ENCODE measurements at regions of chr5 and their contacts with region 1.

Region 1: GRCh38 chr5:150758531-150759333 is at the start of gene DCTN4:
- DNase-seq: peak; percentile 98
- ATAC-seq: peak; percentile 97
- H3K4me3 ChIP-seq: peak within 1 kb of the TSS; percentile 95
- H3K27ac ChIP-seq: peak within 1 kb of the TSS; percentile 95
- H3K4me1 ChIP-seq: peaks cover 4% of the 10 kb centered on the region; the same call in 1 of the 2 replicates
- H3K27me3 ChIP-seq: no peaks in the 10 kb centered on the region
- CTCF ChIP-seq: no peak
- EP300 ChIP-seq: no peak
- POLR2A ChIP-seq: peak; percentile 91
- RAD21 ChIP-seq: no peak
- polyA plus RNA-seq, gene DCTN4: 7.6 to 8.5 TPM

Region 2: GRCh38 chr5:150700594-150701293 is 58.0 kb before region 1 on chr5 and contains the start of gene RBM22:
- CTCF ChIA-PET with region 1: interaction called, 19 read pairs
- POLR2A ChIA-PET with region 1: interaction called, 3 read pairs
- RAD21 ChIA-PET with region 1: interaction called, 4 read pairs
- SMC1A ChIA-PET with region 1: interaction called, 3 read pairs
- in situ Hi-C with region 1: no loop called
- intact Hi-C with region 1: no loop called
- DNase-seq: peak; percentile 57
- ATAC-seq: peak; percentile 98
- H3K4me3 ChIP-seq: peak within 1 kb of the TSS; percentile 91
- H3K27ac ChIP-seq: peak within 1 kb of the TSS; percentile 87
- H3K4me1 ChIP-seq: no peaks in the 10 kb centered on the region
- H3K27me3 ChIP-seq: no peaks in the 10 kb centered on the region
- CTCF ChIP-seq: peak; percentile 57 to 70 (median 60)
- EP300 ChIP-seq: peak in 1 of 2 experiments; percentile 22; a peak in 1 of 4 replicates
- POLR2A ChIP-seq: peak; percentile 93
- RAD21 ChIP-seq: peak; percentile 29; the same call in 1 of the 2 replicates
- polyA plus RNA-seq, gene RBM22: 26.3 to 40.3 TPM

Region 3: GRCh38 chr5:150734579-150735384 is 23.9 kb before region 1 on chr5:
- CTCF ChIA-PET with region 1: interaction called, 19 read pairs
- POLR2A ChIA-PET with region 1: interaction called, 7 read pairs
- RAD21 ChIA-PET with region 1: interaction called, 4 read pairs
- SMC1A ChIA-PET with region 1: interaction called, 20 read pairs
- in situ Hi-C with region 1: no loop called
- intact Hi-C with region 1: no loop called
- DNase-seq: peak; percentile 53
- ATAC-seq: peak; percentile 96
- H3K4me3 ChIP-seq: no peak overlapping the region
- H3K27ac ChIP-seq: peak overlapping the region; percentile 67
- H3K4me1 ChIP-seq: peaks cover 14% of the 10 kb centered on the region
- H3K27me3 ChIP-seq: no peaks in the 10 kb centered on the region
- CTCF ChIP-seq: peak; percentile 10 to 21 (median 19); a peak in 3 of 6 replicates
- EP300 ChIP-seq: no peak
- POLR2A ChIP-seq: no peak
- RAD21 ChIP-seq: no peak

Region 4: GRCh38 chr5:150740992-150741391 is 17.7 kb before region 1 on chr5:
- CTCF ChIA-PET with region 1: interaction called, 19 read pairs
- POLR2A ChIA-PET with region 1: interaction called, 6 read pairs
- RAD21 ChIA-PET with region 1: interaction called, 3 read pairs
- SMC1A ChIA-PET with region 1: interaction called, 20 read pairs
- in situ Hi-C with region 1: no loop called
- intact Hi-C with region 1: loop called (anchors 1 kb)
- DNase-seq: no peak
- ATAC-seq: no peak
- H3K4me3 ChIP-seq: no peak overlapping the region
- H3K27ac ChIP-seq: no peak overlapping the region
- H3K4me1 ChIP-seq: no peaks in the 10 kb centered on the region
- H3K27me3 ChIP-seq: no peaks in the 10 kb centered on the region
- CTCF ChIP-seq: no peak
- EP300 ChIP-seq: no peak
- POLR2A ChIP-seq: no peak
- RAD21 ChIP-seq: no peak

Measured in GM12878 (cell line).